ENCODE measurements at regions of chr14 and their contacts with region 1.

Region 1: GRCh38 chr14:65290830-65291229 is 121.7 kb upstream of the FUT8 start:
- DNase-seq: peak; percentile 85
- H3K4me3 Mint-ChIP-seq: peak overlapping the region; percentile 5
- H3K27ac Mint-ChIP-seq: peak overlapping the region; percentile 86
- H3K4me1 Mint-ChIP-seq: peaks cover 37% of the 10 kb centered on the region
- H3K27me3 Mint-ChIP-seq: no peaks in the 10 kb centered on the region
- CTCF ChIP-seq: no peak

Region 2: DNA sequence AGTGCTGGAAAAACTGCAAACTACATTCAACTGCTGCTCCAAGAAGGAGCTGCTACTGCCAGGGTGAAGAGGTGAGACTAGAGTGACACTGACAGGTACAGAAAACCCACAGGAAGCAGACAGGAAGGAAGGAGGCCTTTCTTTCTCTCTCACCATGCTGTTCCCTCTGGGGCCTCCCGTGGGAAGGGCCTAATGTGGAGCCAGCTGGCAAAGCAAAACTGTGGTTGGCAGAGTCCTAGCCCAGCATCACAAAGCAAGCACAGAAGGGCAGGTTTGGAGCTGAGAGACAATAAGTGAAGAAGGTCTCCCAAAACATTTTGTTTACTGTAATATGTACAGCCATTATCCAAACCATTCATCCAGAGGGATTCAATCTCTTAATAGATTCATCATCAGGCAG is 66.0 kb before region 1 on chr14:
- CTCF ChIA-PET with region 1: no interaction called
- intact Hi-C with region 1: no loop called
- DNase-seq: no peak
- H3K4me3 Mint-ChIP-seq: no peak overlapping the region
- H3K27ac Mint-ChIP-seq: no peak overlapping the region
- H3K4me1 Mint-ChIP-seq: peaks cover 53% of the 10 kb centered on the region
- H3K27me3 Mint-ChIP-seq: no peaks in the 10 kb centered on the region
- CTCF ChIP-seq: no peak

Region 3: GRCh38 chr14:65356327-65356852 is 65.6 kb after region 1 on chr14:
- CTCF ChIA-PET with region 1: no interaction called
- intact Hi-C with region 1: loop called (anchors 2 kb)
- DNase-seq: peak; percentile 82
- H3K4me3 Mint-ChIP-seq: no peak overlapping the region
- H3K27ac Mint-ChIP-seq: peak overlapping the region; percentile 83
- H3K4me1 Mint-ChIP-seq: peaks cover 28% of the 10 kb centered on the region
- H3K27me3 Mint-ChIP-seq: no peaks in the 10 kb centered on the region
- CTCF ChIP-seq: no peak